ENCODE measurements at regions of chr4 and their contacts with region 1.

Region 1: DNA sequence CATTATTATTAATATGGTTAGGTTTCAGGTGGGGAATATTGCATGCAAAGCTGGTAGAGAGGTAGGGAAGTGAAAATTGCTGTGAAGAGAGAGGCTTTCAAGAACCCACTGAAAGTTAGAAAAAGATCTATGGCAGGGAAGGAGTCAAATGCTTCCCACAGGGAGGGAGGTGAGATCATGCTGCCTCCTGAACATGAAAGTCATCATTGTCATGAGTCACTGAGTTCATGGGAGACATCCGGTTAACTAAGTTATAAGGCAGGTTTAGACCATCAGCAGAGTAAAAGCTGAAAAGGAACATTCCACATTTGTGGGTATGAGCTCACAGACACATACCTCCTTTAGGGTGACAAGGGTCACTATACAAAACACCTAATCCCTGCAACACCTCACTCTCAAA is 16.2 kb downstream of the GATB start:
- DNase-seq: peak; percentile 97
- ATAC-seq: peak; percentile 88
- H3K4me3 ChIP-seq: no peak overlapping the region
- H3K27ac ChIP-seq: no peak overlapping the region
- H3K4me1 ChIP-seq: peaks cover 7% of the 10 kb centered on the region
- H3K27me3 ChIP-seq: no peaks in the 10 kb centered on the region
- CTCF ChIP-seq: no peak
- POLR2A ChIP-seq: no peak
- RAD21 ChIP-seq: no peak

Region 2: GRCh38 chr4:151604238-151604637 is 140.4 kb before region 1 on chr4:
- CTCF ChIA-PET with region 1: no interaction called
- POLR2A ChIA-PET with region 1: no interaction called
- dilution Hi-C with region 1: no loop called
- in situ Hi-C with region 1: no loop called
- intact Hi-C with region 1: no loop called
- DNase-seq: peak; percentile 32
- ATAC-seq: peak; percentile 72
- H3K4me3 ChIP-seq: no peak overlapping the region
- H3K27ac ChIP-seq: no peak overlapping the region
- H3K4me1 ChIP-seq: peaks cover 3% of the 10 kb centered on the region; the same call in 1 of the 2 replicates
- H3K27me3 ChIP-seq: peaks cover 6% of the 10 kb centered on the region
- CTCF ChIP-seq: peak; percentile 57
- POLR2A ChIP-seq: no peak
- RAD21 ChIP-seq: peak; percentile 54

Region 3: GRCh38 chr4:151690164-151690870 is 54.3 kb before region 1 on chr4:
- CTCF ChIA-PET with region 1: no interaction called
- POLR2A ChIA-PET with region 1: no interaction called
- dilution Hi-C with region 1: no loop called
- in situ Hi-C with region 1: no loop called
- intact Hi-C with region 1: loop called (anchors 5 kb)
- DNase-seq: peak; percentile 74
- ATAC-seq: peak; percentile 68
- H3K4me3 ChIP-seq: no peak overlapping the region
- H3K27ac ChIP-seq: peak overlapping the region; percentile 46; the same call in 1 of the 2 replicates
- H3K4me1 ChIP-seq: peaks cover 38% of the 10 kb centered on the region
- H3K27me3 ChIP-seq: no peaks in the 10 kb centered on the region
- CTCF ChIP-seq: no peak
- POLR2A ChIP-seq: no peak
- RAD21 ChIP-seq: no peak

Region 4: DNA sequence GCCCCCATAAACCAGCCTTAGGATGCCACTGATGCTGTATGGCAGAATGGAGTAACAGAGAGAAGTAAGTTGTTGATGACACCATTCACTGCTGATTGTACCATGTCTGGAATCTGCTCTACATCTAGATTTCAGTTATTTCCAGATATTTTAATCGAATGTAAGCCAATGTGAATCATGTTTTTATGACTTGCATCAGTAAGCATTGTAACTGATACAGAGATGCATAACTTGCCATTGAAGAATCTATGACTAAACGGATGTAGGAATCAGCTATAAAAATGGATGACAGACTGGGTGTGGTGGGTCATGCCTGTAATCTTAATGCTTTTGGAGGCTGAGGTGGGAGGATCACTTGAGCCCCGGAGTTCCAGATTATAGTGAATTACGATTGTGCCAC is 177.2 kb after region 1 on chr4:
- CTCF ChIA-PET with region 1: no interaction called
- POLR2A ChIA-PET with region 1: no interaction called
- dilution Hi-C with region 1: no loop called
- in situ Hi-C with region 1: no loop called
- intact Hi-C with region 1: no loop called
- DNase-seq: peak; percentile 46
- ATAC-seq: peak; percentile 14
- H3K4me3 ChIP-seq: no peak overlapping the region
- H3K27ac ChIP-seq: no peak overlapping the region
- H3K4me1 ChIP-seq: no peaks in the 10 kb centered on the region; the same call in 1 of the 2 replicates
- H3K27me3 ChIP-seq: no peaks in the 10 kb centered on the region; the same call in 1 of the 2 replicates
- CTCF ChIP-seq: no peak
- POLR2A ChIP-seq: no peak
- RAD21 ChIP-seq: no peak

Measured in IMR-90 (cell line).